Panc1 (cell line): ENCODE measurements at regions of chr10 and their contacts with region 1.

Region 1: GRCh38 chr10:72319416-72320254 is 35.1 kb downstream of the DNAJB12 start:
- DNase-seq: no peak
- ATAC-seq: peak; percentile 74
- H3K4me3 ChIP-seq: peak overlapping the region; percentile 15 to 22; a peak in 3 of 4 replicates
- H3K27ac ChIP-seq: peak overlapping the region; percentile 89
- H3K4me1 ChIP-seq: peaks cover 92% of the 10 kb centered on the region
- H3K27me3 ChIP-seq: no peaks in the 10 kb centered on the region
- CTCF ChIP-seq: no peak

Region 2: GRCh38 chr10:71963756-71964668 is 355.6 kb before region 1 on chr10 and contains the start of gene CHST3:
- CTCF ChIA-PET with region 1: no interaction called
- POLR2A ChIA-PET with region 1: no interaction called
- in situ Hi-C with region 1: loop called (anchors 25 kb)
- intact Hi-C with region 1: no loop called
- DNase-seq: no peak
- ATAC-seq: peak; percentile 74
- H3K4me3 ChIP-seq: peak within 1 kb of the TSS; percentile 88 to 89
- H3K27ac ChIP-seq: peak within 1 kb of the TSS; percentile 97
- H3K4me1 ChIP-seq: peaks cover 36% of the 10 kb centered on the region
- H3K27me3 ChIP-seq: no peaks in the 10 kb centered on the region
- CTCF ChIP-seq: no peak
- total RNA-seq, gene CHST3: 44.6 TPM